A673 (cell line): ENCODE measurements at regions of chr15 and their contacts with region 1.

Region 1: GRCh38 chr15:80769829-80770705 is 9.1 kb upstream of the CEMIP start:
- DNase-seq: peak; percentile 39
- H3K4me3 ChIP-seq: no peak overlapping the region
- H3K27ac ChIP-seq: no peak overlapping the region
- H3K4me1 ChIP-seq: no peaks in the 10 kb centered on the region
- H3K27me3 ChIP-seq: no peaks in the 10 kb centered on the region
- CTCF ChIP-seq: no peak

Region 2: GRCh38 chr15:80789296-80789695 is 19.2 kb after region 1 on chr15:
- CTCF ChIA-PET with region 1: no interaction called
- POLR2A ChIA-PET with region 1: interaction called, 11 read pairs
- intact Hi-C with region 1: no loop called
- DNase-seq: no peak
- H3K4me3 ChIP-seq: no peak overlapping the region
- H3K27ac ChIP-seq: no peak overlapping the region
- H3K4me1 ChIP-seq: no peaks in the 10 kb centered on the region
- H3K27me3 ChIP-seq: peaks cover 11% of the 10 kb centered on the region
- CTCF ChIP-seq: no peak